ENCODE measurements at regions of chr4 and their contacts with region 1.

Region 1: DNA sequence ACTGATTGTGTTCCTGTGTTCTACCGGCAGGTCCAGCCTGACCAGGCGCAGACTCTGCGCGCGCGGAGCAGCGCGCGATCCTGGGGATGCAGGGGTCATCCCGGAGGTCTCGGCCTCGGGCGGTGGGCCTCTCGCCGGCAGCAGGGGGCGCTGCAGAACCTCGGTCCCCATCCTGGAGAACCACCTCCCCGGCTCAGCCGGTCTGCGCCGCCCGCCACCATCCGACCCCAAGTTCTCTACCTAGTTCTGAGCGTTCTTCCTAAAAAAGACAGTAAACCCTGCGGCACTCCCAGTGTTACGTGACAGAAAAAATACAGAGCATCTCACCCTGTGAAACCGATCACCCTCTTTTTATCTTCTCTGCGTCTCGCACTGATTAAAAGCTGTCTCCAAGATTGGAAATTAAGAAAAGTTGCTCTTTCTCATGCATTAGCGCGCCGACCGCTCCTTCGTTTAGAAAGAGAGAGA is 1.6 kb downstream of the TRPC3 start:
- DNase-seq: peak; percentile 87
- H3K4me3 ChIP-seq: peak overlapping the region; percentile 59
- H3K27ac ChIP-seq: no peak overlapping the region
- H3K4me1 ChIP-seq: peaks cover 7% of the 10 kb centered on the region
- H3K27me3 ChIP-seq: peaks cover 18% of the 10 kb centered on the region
- CTCF ChIP-seq: peak; percentile 74

Region 2: GRCh38 chr4:121668368-121669162 is 281.7 kb before region 1 on chr4:
- intact Hi-C with region 1: no loop called
- DNase-seq: no peak
- H3K4me3 ChIP-seq: no peak overlapping the region
- H3K27ac ChIP-seq: no peak overlapping the region
- H3K4me1 ChIP-seq: no peaks in the 10 kb centered on the region
- H3K27me3 ChIP-seq: no peaks in the 10 kb centered on the region
- CTCF ChIP-seq: no peak

Region 3: GRCh38 chr4:122003335-122003734 is 53.1 kb after region 1 on chr4:
- intact Hi-C with region 1: loop called (anchors 2 kb)
- DNase-seq: peak; percentile 38
- H3K4me3 ChIP-seq: no peak overlapping the region
- H3K27ac ChIP-seq: no peak overlapping the region
- H3K4me1 ChIP-seq: no peaks in the 10 kb centered on the region
- H3K27me3 ChIP-seq: no peaks in the 10 kb centered on the region
- CTCF ChIP-seq: peak; percentile 34

Region 4: DNA sequence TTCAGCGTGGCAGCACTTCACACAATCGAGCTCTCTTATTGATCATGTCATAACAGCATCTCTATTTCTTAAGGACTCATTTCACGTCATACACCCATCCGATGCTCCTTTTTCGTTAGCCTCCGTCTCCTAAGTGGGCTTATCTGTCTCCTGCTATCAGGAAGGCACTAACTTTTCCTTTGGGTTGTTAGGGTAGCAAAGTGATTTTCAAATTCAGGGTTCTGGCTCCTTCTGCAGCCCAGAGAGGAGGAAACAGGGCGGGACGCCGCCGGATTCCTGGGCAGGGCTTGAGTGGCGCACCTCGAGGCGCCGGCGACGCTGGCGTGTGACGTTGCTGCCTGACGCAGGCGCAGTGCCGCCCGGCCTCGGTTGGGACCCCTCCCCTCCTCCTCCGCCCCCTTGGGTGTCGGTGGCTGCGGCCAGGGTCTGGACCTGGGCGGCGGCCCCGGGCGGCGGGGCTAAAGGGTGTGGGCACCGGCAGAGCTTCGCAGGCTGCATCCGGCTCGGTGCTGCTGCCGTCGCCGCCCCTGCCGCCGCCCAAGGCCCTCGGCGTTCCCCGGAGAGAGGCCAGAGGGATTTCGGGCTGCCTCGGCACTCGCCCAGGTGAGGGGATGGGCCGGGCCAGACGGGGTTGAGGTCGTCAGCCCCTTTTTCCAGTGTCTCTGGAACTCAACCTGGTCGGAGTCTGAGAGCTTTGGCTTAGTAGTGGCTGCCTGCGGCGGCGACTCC is 201.9 kb after region 1 on chr4 and contains the start of gene BLTP1:
- intact Hi-C with region 1: loop called (anchors 10 kb)
- DNase-seq: peak; percentile 93
- H3K4me3 ChIP-seq: peak within 1 kb of the TSS; percentile 90
- H3K27ac ChIP-seq: peak within 1 kb of the TSS; percentile 98
- H3K4me1 ChIP-seq: no peaks in the 10 kb centered on the region
- H3K27me3 ChIP-seq: no peaks in the 10 kb centered on the region
- CTCF ChIP-seq: no peak
- total RNA-seq, gene BLTP1: 47.8 to 80.1 TPM

Measured in colonic mucosa (tissue), 4 donors.